Natural killer cell (primary cell): ENCODE measurements at regions of chr16 and their contacts with region 1.

Region 1: DNA sequence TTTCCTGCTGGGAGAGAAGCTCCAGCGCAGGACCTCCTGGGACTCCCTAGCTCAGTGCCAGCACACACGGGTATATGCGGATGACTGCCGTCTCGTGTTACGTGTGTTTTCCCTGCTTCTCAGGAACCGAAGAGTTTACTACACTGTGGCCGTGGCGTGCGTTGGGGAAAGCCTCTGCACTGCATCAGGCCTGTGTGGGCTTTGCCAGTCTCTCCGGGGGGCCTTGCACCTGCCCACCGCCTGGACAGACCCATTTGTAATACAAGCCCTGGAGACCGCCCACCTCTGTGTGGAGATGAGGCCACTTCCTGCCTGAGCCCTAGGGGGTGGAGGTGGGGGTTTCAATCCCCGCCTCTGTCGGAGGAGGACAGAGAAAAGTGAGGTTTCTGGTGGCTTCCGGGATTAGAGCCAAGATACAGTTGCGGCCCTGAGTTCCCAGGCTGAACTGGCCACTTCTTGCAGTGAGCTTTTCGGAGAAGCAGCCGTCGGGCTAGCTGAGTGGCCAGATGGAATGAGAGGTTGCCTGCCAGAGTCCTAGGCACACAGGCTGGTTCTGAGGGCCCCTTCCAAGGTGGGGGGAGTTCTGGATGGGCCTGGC is 43.4 kb upstream of the GSE1 start:
- DNase-seq: peak; percentile 62 to 69
- ATAC-seq: peak; percentile 51 to 66 (median 57)
- H3K4me3 ChIP-seq: peak overlapping the region; percentile 35
- H3K4me3 Mint-ChIP-seq: peak overlapping the region; percentile 95
- H3K27ac ChIP-seq: peak overlapping the region; percentile 86
- H3K27ac Mint-ChIP-seq: peak overlapping the region; percentile 96 to 99
- H3K4me1 ChIP-seq: peaks cover 98% of the 10 kb centered on the region
- H3K4me1 Mint-ChIP-seq: peaks cover 89 to 98% of the 10 kb centered on the region in 2 donors
- H3K27me3 ChIP-seq: no peaks in the 10 kb centered on the region
- H3K27me3 Mint-ChIP-seq: peaks cover 0 to 3% of the 10 kb centered on the region in 2 donors
- CTCF ChIP-seq: no peak

Region 2: DNA sequence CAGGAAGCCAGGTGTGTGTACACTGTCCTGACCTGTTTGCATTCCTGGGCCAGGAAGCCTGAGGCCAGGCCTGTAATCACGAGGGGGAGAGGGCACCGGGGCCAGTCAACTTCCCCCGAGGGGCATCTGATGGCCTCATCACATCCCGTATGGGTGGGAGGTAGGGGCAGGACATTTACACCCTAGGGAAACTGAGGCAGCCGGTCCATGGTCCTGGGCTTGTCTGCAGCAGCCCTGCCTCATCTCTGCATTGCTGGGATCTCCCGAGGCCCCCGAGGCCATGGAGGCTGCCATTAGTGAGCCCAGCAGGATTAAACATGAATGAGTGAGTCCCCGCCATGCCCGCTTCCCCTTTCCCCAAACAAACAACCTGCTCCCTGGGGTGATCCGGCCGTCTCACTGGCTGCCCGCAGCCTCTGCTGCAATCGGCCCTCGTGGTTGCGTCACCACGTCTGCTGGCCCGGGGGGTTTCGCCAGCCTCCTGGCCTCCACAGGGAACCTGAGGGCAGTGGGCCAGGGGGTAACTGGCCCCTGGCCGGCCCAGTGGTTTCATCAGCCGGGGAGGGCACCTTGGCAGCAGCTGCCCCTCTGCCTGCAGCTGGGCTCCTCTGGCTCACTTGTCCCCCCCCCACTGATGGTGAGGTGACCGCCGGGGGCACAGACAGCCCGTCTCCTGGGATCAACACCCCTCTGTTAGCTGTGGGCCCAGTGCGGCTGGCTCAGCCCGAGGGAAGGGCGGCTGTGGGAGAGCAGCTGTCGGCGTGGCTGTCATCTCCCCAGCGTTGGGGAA is 44.9 kb before region 1 on chr16:
- intact Hi-C with region 1: loop called (anchors 5 kb)
- DNase-seq: no peak
- ATAC-seq: peak in 1 of 3 donors; percentile 70
- H3K4me3 ChIP-seq: no peak overlapping the region
- H3K4me3 Mint-ChIP-seq: no peak overlapping the region
- H3K27ac ChIP-seq: no peak overlapping the region
- H3K27ac Mint-ChIP-seq: no peak overlapping the region
- H3K4me1 ChIP-seq: peaks cover 28% of the 10 kb centered on the region
- H3K4me1 Mint-ChIP-seq: peaks cover 5 to 16% of the 10 kb centered on the region in 2 donors
- H3K27me3 ChIP-seq: no peaks in the 10 kb centered on the region
- H3K27me3 Mint-ChIP-seq: peaks cover 0 to 6% of the 10 kb centered on the region in 2 donors
- CTCF ChIP-seq: no peak